ENCODE measurements at regions of chr6 and their contacts with region 1.

Region 1: GRCh38 chr6:35731736-35732532 is 4.9 kb upstream of the ARMC12 start:
- DNase-seq: peak; percentile 91 to 98 (median 96)
- ATAC-seq: peak; percentile 79
- H3K4me3 ChIP-seq: peak overlapping the region; percentile 94
- H3K4me3 Mint-ChIP-seq: peak overlapping the region; percentile 76 to 92 (median 88)
- H3K27ac ChIP-seq: peak overlapping the region; percentile 97
- H3K27ac Mint-ChIP-seq: peak overlapping the region; percentile 90 to 99 (median 94)
- H3K4me1 ChIP-seq: peaks cover 68 to 83% of the 10 kb centered on the region in 2 donors
- H3K4me1 Mint-ChIP-seq: peaks cover 50 to 87% (median 75%) of the 10 kb centered on the region in 7 donors
- H3K27me3 ChIP-seq: no peaks in the 10 kb centered on the region
- H3K27me3 Mint-ChIP-seq: no peaks in the 10 kb centered on the region

Region 2: DNA sequence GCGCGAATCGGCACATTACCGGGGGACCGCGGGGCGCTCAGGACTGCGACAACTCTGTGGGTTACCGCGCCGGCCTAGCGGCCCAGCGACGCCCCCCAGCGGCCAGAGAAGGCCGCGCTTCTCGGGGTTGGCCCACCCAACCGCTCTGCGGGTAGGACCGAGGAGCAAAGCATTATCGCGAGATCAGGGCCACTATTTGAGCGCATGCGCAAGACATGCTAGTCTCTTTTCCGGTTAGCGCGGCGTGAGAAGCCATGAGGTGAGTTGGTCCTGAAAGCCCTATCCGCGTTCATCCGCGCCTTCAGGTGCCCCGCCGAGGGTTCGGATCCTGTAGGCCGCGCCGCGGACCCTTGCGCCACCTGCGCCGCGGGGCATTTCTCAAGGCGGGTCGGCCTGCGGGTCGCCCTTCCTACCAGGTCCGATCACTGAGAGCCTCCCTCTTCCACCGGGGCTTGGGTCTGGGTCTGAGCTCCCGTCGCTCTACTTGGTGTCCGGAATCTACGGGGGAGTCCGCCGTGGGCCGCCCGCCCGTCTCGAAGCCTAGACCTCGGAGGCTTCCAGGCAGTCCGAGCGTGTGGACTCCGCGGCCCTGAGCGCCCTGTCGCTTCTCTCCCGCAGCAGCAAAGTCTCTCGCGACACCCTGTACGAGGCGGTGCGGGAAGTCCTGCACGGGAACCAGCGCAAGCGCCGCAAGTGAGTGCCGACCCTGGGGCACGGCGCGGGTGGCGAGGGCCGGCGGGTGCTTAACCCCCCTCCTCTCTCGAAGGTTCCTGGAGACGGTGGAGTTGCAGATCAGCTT is 263.6 kb before region 1 on chr6 and contains the start of gene RPL10A:
- CTCF ChIA-PET with region 1: interaction called, 9 read pairs
- POLR2A ChIA-PET with region 1: interaction called, 4 read pairs
- intact Hi-C with region 1: loop called (anchors 1 to 2 kb)
- DNase-seq: peak; percentile 87 to 97 (median 94)
- ATAC-seq: peak; percentile 96
- H3K4me3 ChIP-seq: peak within 1 kb of the TSS; percentile 91
- H3K4me3 Mint-ChIP-seq: peak within 1 kb of the TSS; percentile 85 to 99 (median 98)
- H3K27ac ChIP-seq: peak within 1 kb of the TSS; percentile 83
- H3K27ac Mint-ChIP-seq: peak within 1 kb of the TSS; percentile 94 to 100 (median 99)
- H3K4me1 ChIP-seq: peaks cover 11 to 27% of the 10 kb centered on the region in 2 donors
- H3K4me1 Mint-ChIP-seq: peaks cover 25 to 49% (median 35%) of the 10 kb centered on the region in 7 donors
- H3K27me3 ChIP-seq: no peaks in the 10 kb centered on the region
- H3K27me3 Mint-ChIP-seq: no peaks in the 10 kb centered on the region
- total RNA-seq, gene RPL10A: 1,380 to 2,381 (median 2,302) TPM

Region 3: DNA sequence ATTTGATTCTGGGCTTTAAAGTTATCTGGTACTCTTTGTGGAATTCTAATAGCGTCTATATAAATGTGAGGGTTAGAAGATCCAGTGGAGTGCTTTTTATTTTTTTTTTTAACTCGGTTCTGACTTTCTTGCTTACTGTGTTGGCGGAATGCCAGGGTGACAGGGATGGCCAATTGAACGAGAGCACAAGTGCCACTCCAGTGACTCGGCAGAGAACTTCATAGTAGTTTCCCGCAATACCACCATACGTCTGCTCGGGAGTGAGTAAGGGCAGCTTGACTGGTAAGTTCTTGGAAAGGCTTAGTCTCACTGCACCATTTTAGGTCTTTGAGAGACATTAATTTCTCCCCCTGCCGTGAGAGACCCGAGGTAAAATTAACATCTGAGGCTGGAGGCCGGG is 169.9 kb before region 1 on chr6:
- CTCF ChIA-PET with region 1: interaction called, 11 read pairs
- POLR2A ChIA-PET with region 1: no interaction called
- intact Hi-C with region 1: no loop called
- DNase-seq: no peak
- ATAC-seq: no peak
- H3K4me3 ChIP-seq: no peak overlapping the region
- H3K4me3 Mint-ChIP-seq: no peak overlapping the region
- H3K27ac ChIP-seq: no peak overlapping the region
- H3K27ac Mint-ChIP-seq: no peak overlapping the region
- H3K4me1 ChIP-seq: no peaks in the 10 kb centered on the region
- H3K4me1 Mint-ChIP-seq: peaks cover 0 to 9% (median 8%) of the 10 kb centered on the region in 7 donors
- H3K27me3 ChIP-seq: no peaks in the 10 kb centered on the region
- H3K27me3 Mint-ChIP-seq: peaks cover 0 to 45% (median 0%) of the 10 kb centered on the region in 5 donors

Region 4: GRCh38 chr6:35590622-35591066 is 141.3 kb before region 1 on chr6:
- CTCF ChIA-PET with region 1: interaction called, 141 read pairs
- POLR2A ChIA-PET with region 1: interaction called, 157 read pairs
- intact Hi-C with region 1: no loop called
- DNase-seq: no peak
- ATAC-seq: no peak
- H3K4me3 ChIP-seq: no peak overlapping the region
- H3K4me3 Mint-ChIP-seq: peak overlapping the region in 7 of 10 donors; percentile 1 to 80 (median 64)
- H3K27ac ChIP-seq: peak overlapping the region; percentile 56
- H3K27ac Mint-ChIP-seq: peak overlapping the region in 8 of 9 donors; percentile 70 to 95 (median 92)
- H3K4me1 ChIP-seq: peaks cover 26 to 94% of the 10 kb centered on the region in 2 donors
- H3K4me1 Mint-ChIP-seq: peaks cover 48 to 99% (median 91%) of the 10 kb centered on the region in 7 donors
- H3K27me3 ChIP-seq: no peaks in the 10 kb centered on the region
- H3K27me3 Mint-ChIP-seq: no peaks in the 10 kb centered on the region

Region 5: GRCh38 chr6:35640017-35640664 is 91.8 kb before region 1 on chr6:
- CTCF ChIA-PET with region 1: interaction called, 16 read pairs
- POLR2A ChIA-PET with region 1: interaction called, 6 read pairs
- intact Hi-C with region 1: no loop called
- DNase-seq: no peak
- ATAC-seq: no peak
- H3K4me3 ChIP-seq: no peak overlapping the region
- H3K4me3 Mint-ChIP-seq: peak overlapping the region in 1 of 10 donors; percentile 10
- H3K27ac ChIP-seq: no peak overlapping the region
- H3K27ac Mint-ChIP-seq: peak overlapping the region; percentile 50 to 86 (median 74)
- H3K4me1 ChIP-seq: peaks cover 5 to 49% of the 10 kb centered on the region in 2 donors
- H3K4me1 Mint-ChIP-seq: peaks cover 20 to 77% (median 75%) of the 10 kb centered on the region in 7 donors
- H3K27me3 ChIP-seq: no peaks in the 10 kb centered on the region
- H3K27me3 Mint-ChIP-seq: no peaks in the 10 kb centered on the region

Region 6: GRCh38 chr6:35678021-35678654 is 53.8 kb before region 1 on chr6:
- CTCF ChIA-PET with region 1: interaction called, 19 read pairs
- POLR2A ChIA-PET with region 1: interaction called, 79 read pairs
- intact Hi-C with region 1: no loop called
- DNase-seq: no peak
- ATAC-seq: no peak
- H3K4me3 ChIP-seq: no peak overlapping the region
- H3K4me3 Mint-ChIP-seq: peak overlapping the region; percentile 0 to 74 (median 66)
- H3K27ac ChIP-seq: peak overlapping the region; percentile 43
- H3K27ac Mint-ChIP-seq: peak overlapping the region in 7 of 9 donors; percentile 1 to 90 (median 77)
- H3K4me1 ChIP-seq: peaks cover 25 to 72% of the 10 kb centered on the region in 2 donors
- H3K4me1 Mint-ChIP-seq: peaks cover 47 to 100% (median 91%) of the 10 kb centered on the region in 7 donors
- H3K27me3 ChIP-seq: no peaks in the 10 kb centered on the region
- H3K27me3 Mint-ChIP-seq: no peaks in the 10 kb centered on the region

Region 7: DNA sequence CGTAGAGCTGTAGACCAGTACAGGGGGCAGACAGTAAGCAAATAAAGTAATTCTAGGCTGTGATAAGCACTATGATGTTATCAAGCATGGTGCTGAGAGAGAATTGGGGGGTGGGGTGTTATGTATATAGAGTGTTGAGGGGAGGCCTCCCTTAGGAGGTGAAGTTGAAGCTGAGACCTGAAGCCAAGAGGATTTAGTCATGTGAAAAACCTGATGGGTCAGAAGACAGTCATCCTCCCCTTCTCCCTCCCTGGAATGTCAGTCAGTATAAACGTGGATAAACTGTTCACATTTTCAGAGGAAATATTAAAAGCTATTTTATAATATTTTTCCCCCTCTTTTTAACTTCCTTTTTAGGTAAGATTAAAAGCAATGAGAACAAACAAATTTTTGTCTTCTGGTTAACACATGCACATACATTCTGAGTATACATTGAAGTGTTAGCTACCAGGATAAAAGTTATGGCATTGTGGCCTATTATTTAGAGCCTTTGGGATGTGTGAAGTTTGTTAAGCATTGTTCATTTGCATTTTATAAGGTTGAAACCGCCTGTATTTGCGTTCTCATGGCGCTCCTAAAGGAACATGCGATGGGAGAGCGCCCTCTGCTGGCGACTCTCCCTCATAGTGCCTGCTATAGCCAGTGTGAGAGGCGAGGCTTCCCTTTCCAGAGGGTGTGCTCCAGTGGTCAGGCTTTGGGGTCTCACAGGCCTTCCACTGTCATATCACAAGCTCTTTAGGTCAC is 363.0 kb after region 1 on chr6:
- CTCF ChIA-PET with region 1: interaction called, 3 read pairs
- POLR2A ChIA-PET with region 1: no interaction called
- intact Hi-C with region 1: loop called in 1 of 2 experiments (anchors 10 kb)
- DNase-seq: peak; percentile 61 to 82 (median 77)
- ATAC-seq: peak; percentile 88
- H3K4me3 ChIP-seq: no peak overlapping the region
- H3K4me3 Mint-ChIP-seq: no peak overlapping the region
- H3K27ac ChIP-seq: peak overlapping the region; percentile 62
- H3K27ac Mint-ChIP-seq: peak overlapping the region in 8 of 9 donors; percentile 46 to 85 (median 78)
- H3K4me1 ChIP-seq: peaks cover 15 to 21% of the 10 kb centered on the region in 2 donors
- H3K4me1 Mint-ChIP-seq: peaks cover 14 to 48% (median 40%) of the 10 kb centered on the region in 7 donors
- H3K27me3 ChIP-seq: no peaks in the 10 kb centered on the region
- H3K27me3 Mint-ChIP-seq: no peaks in the 10 kb centered on the region

Measured in naive thymus-derived CD4-positive, alpha-beta T cell (primary cell).